Activated T-helper 2 cell treated with anti-CD3 and anti-CD28 coated beads, Interferon-gamma antibody, Interleukin-2, Interleukin-4, amounts not matched to agents 10 μg/mL and 5 μg/mL and 100 μg/mL, durations not matched to agents 14 hours and 24 hours and 36 hours (primary cell): ENCODE measurements at regions of chr15 and their contacts with region 1.

Region 1: GRCh38 chr15:34367101-34368081 is at the start of gene LPCAT4:
- DNase-seq: peak; percentile 88
- H3K4me3 Mint-ChIP-seq: peak within 1 kb of the TSS; percentile 98
- H3K27ac Mint-ChIP-seq: peak within 1 kb of the TSS; percentile 97
- H3K4me1 Mint-ChIP-seq: peaks cover 26% of the 10 kb centered on the region
- H3K27me3 Mint-ChIP-seq: no peaks in the 10 kb centered on the region
- total RNA-seq, gene LPCAT4: 70.9 and 76.1 TPM in 2 replicates

Region 2: GRCh38 chr15:34241372-34242330 is 125.7 kb before region 1 on chr15:
- intact Hi-C with region 1: loop called (anchors 1 kb)
- DNase-seq: no peak
- H3K4me3 Mint-ChIP-seq: no peak overlapping the region
- H3K27ac Mint-ChIP-seq: peak overlapping the region; percentile 53
- H3K4me1 Mint-ChIP-seq: peaks cover 31% of the 10 kb centered on the region
- H3K27me3 Mint-ChIP-seq: no peaks in the 10 kb centered on the region

Region 3: GRCh38 chr15:34318277-34319079 is 48.9 kb before region 1 on chr15:
- intact Hi-C with region 1: loop called (anchors 1 kb)
- DNase-seq: no peak
- H3K4me3 Mint-ChIP-seq: peak overlapping the region; percentile 95
- H3K27ac Mint-ChIP-seq: peak overlapping the region; percentile 95
- H3K4me1 Mint-ChIP-seq: peaks cover 55% of the 10 kb centered on the region
- H3K27me3 Mint-ChIP-seq: no peaks in the 10 kb centered on the region

Region 4: DNA sequence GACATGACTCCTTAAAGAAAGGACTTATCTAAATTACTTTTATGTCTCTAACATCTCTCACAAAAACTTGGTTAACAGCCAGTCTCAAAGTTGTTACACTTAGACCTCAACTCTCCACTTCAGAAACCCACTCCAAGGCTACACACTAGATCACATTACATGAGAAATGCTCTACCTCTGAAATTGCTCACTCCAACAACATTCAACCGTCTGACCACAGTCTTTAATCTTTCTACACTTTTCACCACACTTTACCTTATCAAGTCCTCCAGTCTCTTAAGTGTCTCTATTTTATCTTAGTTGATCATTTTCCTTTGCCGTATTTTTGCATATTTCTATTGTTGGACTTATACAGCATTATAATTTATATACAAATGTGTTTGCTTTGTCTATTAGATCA is 35.6 kb before region 1 on chr15:
- intact Hi-C with region 1: loop called (anchors 5 kb)
- DNase-seq: no peak
- H3K4me3 Mint-ChIP-seq: peak overlapping the region; percentile 38
- H3K27ac Mint-ChIP-seq: peak overlapping the region; percentile 85
- H3K4me1 Mint-ChIP-seq: peaks cover 72% of the 10 kb centered on the region
- H3K27me3 Mint-ChIP-seq: no peaks in the 10 kb centered on the region

Region 5: GRCh38 chr15:34342737-34343575 is 24.4 kb before region 1 on chr15 and contains the starts of genes NOP10 and NUTM1:
- intact Hi-C with region 1: loop called (anchors 1 kb)
- DNase-seq: peak; percentile 91
- H3K4me3 Mint-ChIP-seq: no peak within 1 kb of the TSS
- H3K27ac Mint-ChIP-seq: peak within 1 kb of the TSS; percentile 48
- H3K4me1 Mint-ChIP-seq: peaks cover 18% of the 10 kb centered on the region
- H3K27me3 Mint-ChIP-seq: no peaks in the 10 kb centered on the region
- total RNA-seq, gene NOP10: 227 and 232 TPM in 2 replicates
- total RNA-seq, gene NUTM1: not detected in 2 replicates

Region 6: DNA sequence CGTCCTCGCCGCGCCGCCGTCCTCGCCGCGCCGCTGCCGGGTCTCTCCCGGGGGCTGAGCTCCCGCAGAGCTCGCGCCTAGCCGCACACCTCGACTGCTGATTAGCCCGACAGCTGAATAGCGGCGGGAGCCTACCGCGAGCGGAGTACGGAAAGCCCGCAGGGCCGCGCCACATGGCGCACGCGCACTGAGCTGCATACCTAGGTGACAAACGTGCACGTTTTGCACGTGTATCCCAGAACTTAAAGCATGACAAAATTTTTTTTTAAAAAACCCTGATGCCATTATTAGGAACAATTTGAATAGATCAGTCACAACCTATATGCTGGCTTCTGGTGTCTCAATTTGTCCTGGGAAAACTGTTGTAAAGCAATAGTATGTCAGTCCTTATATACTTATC is 70.3 kb after region 1 on chr15 and contains the start of gene GOLGA8A:
- intact Hi-C with region 1: loop called (anchors 2 kb)
- DNase-seq: peak; percentile 79
- H3K4me3 Mint-ChIP-seq: peak within 1 kb of the TSS; percentile 92
- H3K27ac Mint-ChIP-seq: peak within 1 kb of the TSS; percentile 95
- H3K4me1 Mint-ChIP-seq: peaks cover 20% of the 10 kb centered on the region
- H3K27me3 Mint-ChIP-seq: peaks cover 14% of the 10 kb centered on the region
- total RNA-seq, gene GOLGA8A: 238 and 258 TPM in 2 replicates